ENCODE measurements at regions of chr17 and their contacts with region 1.

Region 1: GRCh38 chr17:11178581-11178980 is 62.4 kb upstream of the SHISA6 start:
- DNase-seq: no peak
- ATAC-seq: no peak
- H3K4me3 ChIP-seq: no peak overlapping the region
- H3K27ac ChIP-seq: no peak overlapping the region
- H3K4me1 ChIP-seq: no peaks in the 10 kb centered on the region
- H3K27me3 ChIP-seq: no peaks in the 10 kb centered on the region
- CTCF ChIP-seq: no peak

Region 2: GRCh38 chr17:10875979-10876555 is 302.5 kb before region 1 on chr17:
- intact Hi-C with region 1: no loop called
- DNase-seq: peak; percentile 21 to 32
- ATAC-seq: peak in 1 of 8 donors; percentile 50
- H3K4me3 ChIP-seq: no peak overlapping the region
- H3K27ac ChIP-seq: no peak overlapping the region
- H3K4me1 ChIP-seq: no peaks in the 10 kb centered on the region
- H3K27me3 ChIP-seq: peaks cover 0 to 38% (median 18%) of the 10 kb centered on the region in 7 donors
- CTCF ChIP-seq: peak; percentile 31 to 76 (median 66)

Region 3: DNA sequence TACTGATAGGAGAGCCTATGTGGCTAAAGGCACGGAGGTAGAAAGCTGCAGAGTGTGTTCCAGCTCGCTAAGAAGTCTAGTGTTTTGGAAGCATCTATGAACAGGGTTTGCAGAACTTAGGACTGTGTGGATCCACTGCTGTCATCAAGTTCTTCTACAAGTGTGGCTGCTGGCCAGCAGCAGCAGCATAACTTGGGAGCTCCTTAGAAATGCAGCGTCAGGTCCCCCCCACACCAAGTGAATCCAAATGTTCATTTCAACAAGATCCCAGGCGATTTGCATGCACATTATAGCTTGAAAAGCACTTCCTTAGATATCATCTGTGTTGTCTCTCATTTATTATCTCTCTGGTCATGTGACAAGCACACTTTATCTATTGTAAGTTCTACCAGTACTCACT is 69.5 kb before region 1 on chr17:
- intact Hi-C with region 1: no loop called
- DNase-seq: no peak
- ATAC-seq: no peak
- H3K4me3 ChIP-seq: no peak overlapping the region
- H3K27ac ChIP-seq: no peak overlapping the region
- H3K4me1 ChIP-seq: no peaks in the 10 kb centered on the region
- H3K27me3 ChIP-seq: no peaks in the 10 kb centered on the region
- CTCF ChIP-seq: no peak

Region 4: DNA sequence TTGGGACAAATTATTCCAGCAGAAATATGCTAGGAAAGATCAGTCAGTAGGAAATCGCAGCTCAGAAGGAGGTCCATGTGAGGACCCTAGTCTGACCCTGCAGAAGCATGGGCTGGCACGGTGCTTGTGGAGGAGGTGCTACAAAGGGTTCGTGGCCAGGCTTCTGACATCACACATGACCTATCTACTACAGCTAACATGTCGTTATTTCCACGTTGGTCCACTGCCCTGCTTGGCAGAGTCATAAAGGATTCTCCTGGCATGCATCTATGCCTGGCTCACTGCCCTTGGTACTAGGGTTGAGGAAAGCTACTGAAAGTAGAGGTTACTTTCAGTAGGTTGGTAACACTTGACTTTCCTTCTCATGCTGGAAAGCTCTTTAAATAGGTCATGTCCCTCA is 55.7 kb before region 1 on chr17:
- intact Hi-C with region 1: no loop called
- DNase-seq: peak; percentile 15 to 16
- ATAC-seq: peak in 2 of 8 donors; percentile 22 to 70
- H3K4me3 ChIP-seq: no peak overlapping the region
- H3K27ac ChIP-seq: no peak overlapping the region
- H3K4me1 ChIP-seq: no peaks in the 10 kb centered on the region
- H3K27me3 ChIP-seq: peaks cover 0 to 6% (median 0%) of the 10 kb centered on the region in 7 donors
- CTCF ChIP-seq: no peak

Region 5: GRCh38 chr17:11221721-11222120 is 43.1 kb after region 1 on chr17:
- intact Hi-C with region 1: loop called in 1 of 10 experiments (anchors 5 kb)
- DNase-seq: no peak
- ATAC-seq: no peak
- H3K4me3 ChIP-seq: no peak overlapping the region
- H3K27ac ChIP-seq: no peak overlapping the region
- H3K4me1 ChIP-seq: no peaks in the 10 kb centered on the region
- H3K27me3 ChIP-seq: peaks cover 0 to 23% (median 0%) of the 10 kb centered on the region in 7 donors
- CTCF ChIP-seq: no peak

Measured in heart right ventricle (tissue), 16 donors.